BJ (cell line): ENCODE measurements at regions of chr1 and their contacts with region 1.

Region 1: GRCh38 chr1:203267347-203267846 is 37.9 kb upstream of the BTG2 start:
- DNase-seq: peak; percentile 62
- H3K4me3 ChIP-seq: peak overlapping the region; percentile 56
- H3K27me3 ChIP-seq: peaks cover 2% of the 10 kb centered on the region; the same call in 1 of the 2 replicates
- CTCF ChIP-seq: peak; percentile 94

Region 2: GRCh38 chr1:202935844-202936243 is 331.6 kb before region 1 on chr1:
- CTCF ChIA-PET with region 1: no interaction called
- POLR2A ChIA-PET with region 1: no interaction called
- DNase-seq: no peak
- H3K4me3 ChIP-seq: no peak overlapping the region
- H3K27me3 ChIP-seq: no peaks in the 10 kb centered on the region
- CTCF ChIP-seq: no peak

Region 3: DNA sequence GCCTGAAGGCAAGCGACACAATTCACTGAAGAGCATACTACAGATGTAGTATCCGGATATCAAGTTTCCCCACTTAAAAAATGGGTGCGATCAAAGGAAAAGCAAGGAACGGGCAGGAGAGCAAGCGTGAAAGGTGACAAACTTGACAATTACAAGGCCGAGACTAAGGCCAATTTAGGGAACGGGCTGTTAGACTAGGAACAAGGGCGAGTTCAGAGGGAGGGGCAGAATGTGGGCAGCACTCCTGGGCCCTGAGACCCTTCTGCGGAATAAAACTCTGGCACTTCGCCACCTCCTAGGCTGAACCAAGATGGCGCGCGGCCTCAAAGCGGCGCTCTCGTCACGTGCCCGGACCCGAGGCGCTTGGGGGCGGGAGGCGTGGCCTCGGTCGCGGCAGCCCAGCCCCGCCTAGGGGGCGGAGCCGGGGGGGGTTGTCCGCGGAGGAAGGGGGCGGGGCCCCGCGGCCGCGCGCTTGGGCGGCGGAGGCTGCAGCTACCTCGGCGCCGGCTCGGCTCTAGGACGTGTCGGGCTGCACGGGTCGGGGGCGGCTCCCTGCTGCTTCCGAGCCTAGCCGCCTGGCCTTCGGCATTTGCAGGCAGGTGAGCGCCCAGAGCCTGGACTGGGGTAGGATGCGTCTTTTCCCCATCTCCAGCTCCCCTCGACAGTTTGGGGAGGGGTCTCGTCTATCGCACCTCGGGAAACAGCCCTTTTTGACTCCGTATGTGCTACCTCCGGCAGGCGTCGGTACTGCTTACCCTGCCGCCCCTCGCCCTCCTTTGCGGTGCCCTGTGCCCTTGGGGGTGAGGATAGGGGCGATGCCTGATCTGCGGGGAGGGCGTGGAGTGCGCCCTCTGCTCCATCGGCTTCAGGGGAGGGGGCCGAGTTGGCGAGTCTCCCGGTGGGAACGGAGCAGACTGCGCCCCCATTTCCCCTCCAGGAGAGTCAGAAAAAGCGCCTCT is 241.1 kb before region 1 on chr1 and contains the start of gene PPFIA4:
- CTCF ChIA-PET with region 1: interaction called, 40 read pairs
- POLR2A ChIA-PET with region 1: no interaction called
- DNase-seq: no peak
- H3K4me3 ChIP-seq: peak within 1 kb of the TSS; percentile 65
- H3K27me3 ChIP-seq: peaks cover 1% of the 10 kb centered on the region
- CTCF ChIP-seq: no peak
- polyA plus RNA-seq, gene PPFIA4: 2.0 and 3.8 TPM in 2 replicates

Region 4: DNA sequence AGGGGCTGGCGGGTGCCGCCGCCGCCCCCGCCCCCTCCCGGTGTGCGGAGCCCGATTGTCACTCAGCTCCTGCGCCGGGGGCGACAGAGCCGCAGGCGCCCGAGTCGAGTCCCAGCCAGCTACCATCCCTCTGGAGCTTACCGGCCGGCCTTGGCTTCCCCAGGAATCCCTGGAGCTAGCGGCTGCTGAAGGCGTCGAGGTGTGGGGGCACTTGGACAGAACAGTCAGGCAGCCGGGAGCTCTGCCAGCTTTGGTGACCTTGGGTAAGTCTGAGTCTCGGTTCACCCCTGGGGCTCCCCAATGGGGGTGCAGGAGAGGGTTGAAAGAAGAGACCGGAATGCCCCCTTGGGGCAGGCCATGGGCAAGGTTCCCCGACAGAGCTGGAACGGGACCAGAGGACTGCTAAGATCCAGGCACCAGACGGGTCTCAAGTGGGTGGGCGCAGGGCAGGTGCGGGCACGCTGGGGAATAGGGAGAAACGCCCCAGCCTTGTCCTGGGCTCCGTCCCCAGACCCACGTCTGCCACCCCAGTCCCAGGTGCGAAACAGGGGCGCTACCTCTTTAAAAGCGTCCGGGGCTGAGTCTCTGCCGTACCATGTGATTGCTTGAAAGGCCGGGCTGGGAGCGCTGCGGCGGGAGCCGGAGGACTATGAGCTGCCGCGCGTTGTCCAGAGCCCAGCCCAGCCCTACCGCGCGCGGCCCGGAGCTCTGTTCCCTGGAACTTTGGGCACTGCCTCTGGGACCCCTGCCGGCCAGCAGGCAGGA is 139.5 kb before region 1 on chr1 and contains the start of gene ADORA1:
- CTCF ChIA-PET with region 1: interaction called, 15 read pairs
- POLR2A ChIA-PET with region 1: no interaction called
- DNase-seq: no peak
- H3K4me3 ChIP-seq: peak within 1 kb of the TSS; percentile 41
- H3K27me3 ChIP-seq: peaks cover 8% of the 10 kb centered on the region
- CTCF ChIP-seq: peak; percentile 32
- polyA plus RNA-seq, gene ADORA1: 2.1 and 2.4 TPM in 2 replicates

Region 5: DNA sequence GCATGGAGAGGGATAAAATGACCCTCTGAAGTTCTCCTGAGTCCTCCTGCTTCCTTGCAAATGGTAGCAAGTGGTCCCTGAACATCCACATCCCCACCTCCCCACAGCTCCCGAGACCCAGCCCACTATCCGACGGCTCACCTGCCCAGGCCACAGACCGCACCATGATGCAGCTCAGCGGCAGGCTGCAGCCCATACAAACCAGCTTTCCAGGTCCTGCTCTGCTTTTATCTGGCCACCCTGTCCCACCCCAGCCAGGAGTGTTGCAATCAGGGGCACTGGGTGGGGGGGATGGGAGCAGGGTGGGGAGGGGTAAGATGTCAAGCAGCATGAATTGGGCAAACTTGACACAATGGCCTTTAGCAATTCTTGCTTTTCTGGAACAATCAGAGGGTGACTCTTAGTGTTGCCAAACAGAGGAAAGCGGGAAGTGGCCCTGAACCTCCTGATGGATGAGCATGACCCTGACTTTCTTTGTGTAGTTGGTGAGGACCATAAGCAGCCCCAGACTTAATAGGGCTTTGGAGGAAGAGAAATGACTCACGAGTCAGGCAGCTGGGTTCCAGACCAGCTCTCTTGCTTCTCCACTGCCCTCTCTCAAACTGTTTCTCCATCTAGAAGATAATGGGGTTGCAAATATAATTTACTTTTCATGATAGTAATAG is 37.8 kb before region 1 on chr1 and contains the start of gene CHIT1:
- CTCF ChIA-PET with region 1: interaction called, 14 read pairs
- POLR2A ChIA-PET with region 1: no interaction called
- DNase-seq: no peak
- H3K4me3 ChIP-seq: no peak within 1 kb of the TSS
- H3K27me3 ChIP-seq: peaks cover 17% of the 10 kb centered on the region
- CTCF ChIP-seq: no peak
- polyA plus RNA-seq, gene CHIT1: not detected in 2 replicates

Region 6: GRCh38 chr1:203290261-203291089 is 23.1 kb after region 1 on chr1:
- CTCF ChIA-PET with region 1: interaction called, 10 read pairs
- POLR2A ChIA-PET with region 1: no interaction called
- DNase-seq: no peak
- H3K4me3 ChIP-seq: no peak overlapping the region
- H3K27me3 ChIP-seq: peaks cover 13% of the 10 kb centered on the region
- CTCF ChIP-seq: no peak

Region 7: GRCh38 chr1:203351037-203352013 is 83.9 kb after region 1 on chr1 and contains the start of gene FMOD:
- CTCF ChIA-PET with region 1: interaction called, 484 read pairs
- POLR2A ChIA-PET with region 1: no interaction called
- DNase-seq: no peak
- H3K4me3 ChIP-seq: peak within 1 kb of the TSS; percentile 8; the same call in 1 of the 2 replicates
- H3K27me3 ChIP-seq: peaks cover 7% of the 10 kb centered on the region
- CTCF ChIP-seq: no peak
- polyA plus RNA-seq, gene FMOD: 14.0 and 18.0 TPM in 2 replicates

Region 8: GRCh38 chr1:203497269-203497777 is 229.9 kb after region 1 on chr1:
- CTCF ChIA-PET with region 1: no interaction called
- POLR2A ChIA-PET with region 1: no interaction called
- DNase-seq: no peak
- H3K4me3 ChIP-seq: no peak overlapping the region
- H3K27me3 ChIP-seq: no peaks in the 10 kb centered on the region
- CTCF ChIP-seq: no peak